Left lung (tissue), 14 donors: ENCODE measurements at regions of chr11 and their contacts with region 1.

Region 1: GRCh38 chr11:65516135-65516935 is 8.5 kb upstream of the SCYL1 start:
- DNase-seq: peak in 1 of 4 donors; percentile 18
- ATAC-seq: no peak
- H3K4me3 ChIP-seq: no peak overlapping the region
- H3K27ac ChIP-seq: no peak overlapping the region
- H3K4me1 ChIP-seq: no peaks in the 10 kb centered on the region
- H3K27me3 ChIP-seq: no peaks in the 10 kb centered on the region
- CTCF ChIP-seq: no peak

Region 2: DNA sequence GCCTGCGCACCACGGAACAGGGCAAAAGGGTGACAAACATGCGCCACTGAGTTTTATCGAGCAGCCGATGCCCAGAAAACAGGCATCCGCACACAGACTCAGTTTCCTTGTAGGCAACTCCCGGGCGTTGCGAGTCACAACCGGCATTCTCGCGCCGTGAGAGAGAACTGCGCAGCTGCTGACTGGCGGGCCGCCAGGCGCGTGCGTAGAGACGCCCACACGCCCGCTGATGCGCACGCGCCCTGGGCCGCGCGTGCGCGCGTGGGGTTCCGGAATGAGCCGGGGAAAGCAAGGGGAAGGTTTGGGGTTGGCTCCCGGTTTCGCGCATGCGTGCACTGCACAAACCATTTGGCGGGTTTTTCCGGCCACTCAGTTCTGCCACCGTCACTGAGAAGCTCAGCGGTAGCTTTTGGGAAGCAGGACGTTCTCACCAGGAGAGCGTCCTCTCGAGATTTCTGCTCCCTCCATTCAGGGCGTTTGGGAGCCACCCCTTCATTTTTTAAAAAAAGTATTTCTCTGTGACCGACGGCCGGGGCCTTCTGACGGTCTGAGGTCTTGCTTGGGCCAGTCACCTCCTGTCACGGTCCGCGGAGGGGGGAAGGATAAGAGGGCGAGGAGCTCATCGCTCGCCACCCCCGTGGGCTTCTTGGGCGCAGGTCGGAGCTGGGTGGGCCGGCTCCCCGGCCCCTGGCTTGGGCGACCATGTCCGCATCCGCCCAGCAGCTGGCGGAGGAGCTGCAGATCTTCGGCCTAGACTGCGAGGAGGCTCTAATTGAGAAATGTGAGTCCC is 254.5 kb before region 1 on chr11 and contains the start of gene POLA2:
- intact Hi-C with region 1: no loop called
- DNase-seq: peak; percentile 95 to 99 (median 98)
- ATAC-seq: peak; percentile 94
- H3K4me3 ChIP-seq: peak within 1 kb of the TSS; percentile 82 to 85
- H3K27ac ChIP-seq: peak within 1 kb of the TSS; percentile 88 to 94
- H3K4me1 ChIP-seq: peaks cover 7 to 32% of the 10 kb centered on the region in 2 donors
- H3K27me3 ChIP-seq: no peaks in the 10 kb centered on the region
- CTCF ChIP-seq: peak in 1 of 2 donors; percentile 9
- polyA plus RNA-seq, gene POLA2: 19.3 to 30.2 (median 22.7) TPM

Region 3: GRCh38 chr11:65366340-65366773 is 150.0 kb before region 1 on chr11:
- intact Hi-C with region 1: loop called in 1 of 2 experiments (anchors 2 kb)
- DNase-seq: peak in 1 of 4 donors; percentile 67
- ATAC-seq: peak; percentile 86
- H3K4me3 ChIP-seq: no peak overlapping the region
- H3K27ac ChIP-seq: no peak overlapping the region
- H3K4me1 ChIP-seq: peaks cover 7 to 34% of the 10 kb centered on the region in 2 donors
- H3K27me3 ChIP-seq: no peaks in the 10 kb centered on the region
- CTCF ChIP-seq: peak; percentile 53 to 80

Region 4: DNA sequence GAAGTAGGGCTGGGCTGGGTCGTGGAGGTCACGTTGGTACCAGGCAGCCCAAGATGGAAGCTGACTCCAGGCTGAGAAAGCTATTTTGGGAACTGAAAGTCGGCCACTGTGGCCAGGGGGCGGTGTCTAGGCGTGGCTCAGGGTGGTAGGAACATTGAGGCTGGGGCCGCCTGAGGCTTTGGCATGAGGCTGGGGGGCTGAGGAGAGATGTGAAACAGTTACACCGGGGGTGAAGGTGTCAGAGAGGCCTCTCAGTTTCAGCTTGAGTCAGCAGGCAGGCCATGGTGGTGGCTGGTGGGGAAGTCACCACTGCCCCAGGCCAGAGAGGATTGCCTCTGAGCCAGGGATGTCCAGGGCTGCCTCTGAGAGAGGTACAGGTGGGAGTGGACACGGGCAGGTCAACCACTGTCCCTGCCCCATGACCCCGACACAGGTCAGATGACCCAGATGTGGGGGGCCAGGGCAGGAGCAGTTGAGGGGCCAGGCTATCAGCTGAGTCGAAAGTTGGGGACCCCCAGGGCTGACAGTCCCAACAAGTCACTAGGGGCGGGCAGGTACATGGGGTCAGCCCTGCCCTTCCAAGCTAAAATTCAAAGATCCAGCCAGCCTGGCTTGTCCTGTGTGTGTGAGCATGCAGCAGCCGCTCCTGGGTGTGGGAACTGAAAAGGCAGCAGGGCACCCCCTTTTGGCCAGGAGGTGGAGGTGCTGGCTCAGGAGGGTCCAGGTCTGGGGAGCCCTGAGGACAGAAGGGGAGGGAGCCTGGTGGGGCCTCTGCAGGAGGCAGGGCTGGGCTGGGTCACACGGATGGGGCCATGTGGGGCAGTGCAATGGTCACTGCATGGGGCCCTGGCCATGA is 72.1 kb after region 1 on chr11:
- intact Hi-C with region 1: no loop called
- DNase-seq: peak in 2 of 4 donors; percentile 71 to 87
- ATAC-seq: peak; percentile 66
- H3K4me3 ChIP-seq: peak overlapping the region in 1 of 2 donors; percentile 24
- H3K27ac ChIP-seq: peak overlapping the region in 1 of 2 donors; percentile 84
- H3K4me1 ChIP-seq: peaks cover 10 to 65% of the 10 kb centered on the region in 2 donors
- H3K27me3 ChIP-seq: no peaks in the 10 kb centered on the region
- CTCF ChIP-seq: peak; percentile 36 to 62

Region 5: GRCh38 chr11:65695456-65696241 is 179.3 kb after region 1 on chr11:
- intact Hi-C with region 1: no loop called
- DNase-seq: peak in 1 of 4 donors; percentile 29
- ATAC-seq: no peak
- H3K4me3 ChIP-seq: no peak overlapping the region
- H3K27ac ChIP-seq: peak overlapping the region; percentile 19 to 57
- H3K4me1 ChIP-seq: peaks cover 0 to 6% of the 10 kb centered on the region in 2 donors
- H3K27me3 ChIP-seq: no peaks in the 10 kb centered on the region
- CTCF ChIP-seq: no peak